HCT116 (cell line): ENCODE measurements at regions of chr9 and their contacts with region 1.

Region 1: GRCh38 chr9:76810377-76810957 is 46.2 kb downstream of the PCA3 start:
- DNase-seq: peak; percentile 59
- ATAC-seq: peak; percentile 90
- H3K4me3 ChIP-seq: no peak overlapping the region
- H3K27ac ChIP-seq: no peak overlapping the region
- H3K4me1 ChIP-seq: no peaks in the 10 kb centered on the region
- H3K27me3 ChIP-seq: 0 out of 2 replicates have a peak, but pooled peaks cover 11% of the 10 kb centered on the region
- CTCF ChIP-seq: peak; percentile 63 to 89 (median 88)
- POLR2A ChIP-seq: no peak
- RAD21 ChIP-seq: peak; percentile 92

Region 2: DNA sequence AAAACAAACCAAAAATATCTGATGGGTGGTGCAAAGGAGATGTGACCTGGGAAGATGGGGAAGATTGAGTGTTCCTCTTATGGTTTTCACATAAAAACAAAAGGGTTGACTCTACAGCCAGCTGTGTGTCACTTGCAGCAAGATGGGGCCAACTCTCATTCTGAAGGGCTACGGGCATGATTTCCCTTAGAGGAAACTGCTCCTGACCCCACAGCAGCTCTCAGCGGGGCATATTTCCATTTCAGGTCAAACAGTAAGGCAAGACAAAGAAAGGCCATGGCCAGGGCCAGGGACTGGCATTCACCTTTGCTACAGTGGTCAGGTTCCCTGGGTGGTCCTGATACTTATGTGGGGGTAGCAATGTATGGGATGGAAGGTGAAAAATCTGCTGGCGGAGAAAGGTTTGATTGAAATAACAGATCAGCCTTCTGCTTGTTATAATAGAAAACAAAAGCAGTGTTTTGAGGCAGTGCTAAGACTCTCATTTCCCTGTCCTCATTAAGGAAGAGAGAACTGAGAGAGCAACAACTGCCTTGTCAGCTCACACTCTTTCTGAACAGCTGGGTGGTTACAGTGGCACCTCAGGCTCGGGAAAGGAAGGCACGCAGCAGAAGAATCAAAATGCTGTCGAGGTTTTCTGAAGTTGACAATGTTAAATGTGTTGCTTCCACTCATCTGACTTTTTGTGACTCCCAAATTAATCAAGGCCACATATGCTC is 166.9 kb before region 1 on chr9:
- CTCF ChIA-PET with region 1: no interaction called
- POLR2A ChIA-PET with region 1: no interaction called
- RAD21 ChIA-PET with region 1: no interaction called
- intact Hi-C with region 1: no loop called
- DNase-seq: no peak
- ATAC-seq: no peak
- H3K4me3 ChIP-seq: no peak overlapping the region
- H3K27ac ChIP-seq: no peak overlapping the region
- H3K4me1 ChIP-seq: no peaks in the 10 kb centered on the region
- H3K27me3 ChIP-seq: no peaks in the 10 kb centered on the region
- CTCF ChIP-seq: no peak
- POLR2A ChIP-seq: no peak
- RAD21 ChIP-seq: no peak

Region 3: DNA sequence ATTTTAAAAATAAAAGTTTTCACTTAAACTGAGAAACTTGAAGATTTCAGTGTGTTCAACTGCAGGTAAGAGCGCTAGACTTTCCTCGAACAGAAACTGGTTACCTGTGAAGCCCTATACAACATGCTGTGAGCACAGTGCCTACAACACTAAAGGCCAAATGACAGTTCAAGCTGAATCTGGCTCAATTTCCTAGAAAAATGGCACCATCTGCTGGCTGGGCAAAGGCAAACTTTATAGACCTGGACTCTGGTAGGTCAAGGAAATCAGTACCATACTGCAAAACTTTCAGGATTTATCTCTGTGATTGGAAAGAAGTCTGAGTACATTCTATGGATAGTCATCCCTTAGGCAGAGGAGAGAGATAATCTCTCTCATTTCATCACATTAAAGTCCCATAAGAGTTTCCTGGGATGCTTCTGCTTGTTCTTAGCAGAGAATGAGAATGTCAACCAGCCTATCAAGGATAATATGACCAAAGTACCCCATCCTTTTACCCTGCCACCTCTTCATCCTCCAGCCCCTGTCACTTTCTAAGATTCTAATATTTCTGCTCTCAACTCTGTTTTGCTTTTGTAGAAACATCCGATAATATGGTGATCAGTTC is 177.2 kb after region 1 on chr9:
- CTCF ChIA-PET with region 1: interaction called, 89 read pairs
- POLR2A ChIA-PET with region 1: no interaction called
- RAD21 ChIA-PET with region 1: interaction called in 1 of 2 experiments, 3 read pairs
- intact Hi-C with region 1: loop called (anchors 1 kb)
- DNase-seq: peak; percentile 48
- ATAC-seq: peak; percentile 90
- H3K4me3 ChIP-seq: no peak overlapping the region
- H3K27ac ChIP-seq: no peak overlapping the region
- H3K4me1 ChIP-seq: no peaks in the 10 kb centered on the region
- H3K27me3 ChIP-seq: peaks cover 23% of the 10 kb centered on the region
- CTCF ChIP-seq: peak; percentile 64 to 80 (median 72)
- POLR2A ChIP-seq: no peak
- RAD21 ChIP-seq: peak; percentile 90

Region 4: DNA sequence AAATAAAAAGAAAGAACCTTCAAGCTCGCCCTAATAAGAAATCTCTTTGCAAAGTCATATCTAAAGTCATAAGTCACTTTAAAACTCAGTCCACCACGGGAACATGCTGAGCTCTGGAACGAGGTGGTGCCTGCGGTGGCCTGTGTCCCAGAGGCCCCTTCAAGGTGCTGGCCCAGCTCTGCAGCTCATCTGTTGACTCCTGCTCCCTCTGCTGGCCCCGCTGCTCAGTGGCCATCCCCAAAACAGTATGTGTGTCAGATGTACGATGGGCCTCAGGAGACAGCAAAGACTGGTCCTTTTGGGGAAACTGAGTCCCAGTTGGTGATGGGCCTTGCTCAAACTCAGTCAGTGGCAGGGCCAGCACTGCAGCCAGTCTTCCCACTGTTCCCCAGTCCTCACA is 186.2 kb after region 1 on chr9:
- CTCF ChIA-PET with region 1: interaction called, 55 read pairs
- POLR2A ChIA-PET with region 1: interaction called, 3 read pairs
- RAD21 ChIA-PET with region 1: interaction called, 7 to 11 read pairs
- intact Hi-C with region 1: loop called (anchors 2 kb)
- DNase-seq: no peak
- ATAC-seq: peak; percentile 98
- H3K4me3 ChIP-seq: no peak overlapping the region
- H3K27ac ChIP-seq: no peak overlapping the region
- H3K4me1 ChIP-seq: no peaks in the 10 kb centered on the region
- H3K27me3 ChIP-seq: no peaks in the 10 kb centered on the region
- CTCF ChIP-seq: peak; percentile 45 to 75 (median 67)
- POLR2A ChIP-seq: no peak
- RAD21 ChIP-seq: peak; percentile 59

Region 5: DNA sequence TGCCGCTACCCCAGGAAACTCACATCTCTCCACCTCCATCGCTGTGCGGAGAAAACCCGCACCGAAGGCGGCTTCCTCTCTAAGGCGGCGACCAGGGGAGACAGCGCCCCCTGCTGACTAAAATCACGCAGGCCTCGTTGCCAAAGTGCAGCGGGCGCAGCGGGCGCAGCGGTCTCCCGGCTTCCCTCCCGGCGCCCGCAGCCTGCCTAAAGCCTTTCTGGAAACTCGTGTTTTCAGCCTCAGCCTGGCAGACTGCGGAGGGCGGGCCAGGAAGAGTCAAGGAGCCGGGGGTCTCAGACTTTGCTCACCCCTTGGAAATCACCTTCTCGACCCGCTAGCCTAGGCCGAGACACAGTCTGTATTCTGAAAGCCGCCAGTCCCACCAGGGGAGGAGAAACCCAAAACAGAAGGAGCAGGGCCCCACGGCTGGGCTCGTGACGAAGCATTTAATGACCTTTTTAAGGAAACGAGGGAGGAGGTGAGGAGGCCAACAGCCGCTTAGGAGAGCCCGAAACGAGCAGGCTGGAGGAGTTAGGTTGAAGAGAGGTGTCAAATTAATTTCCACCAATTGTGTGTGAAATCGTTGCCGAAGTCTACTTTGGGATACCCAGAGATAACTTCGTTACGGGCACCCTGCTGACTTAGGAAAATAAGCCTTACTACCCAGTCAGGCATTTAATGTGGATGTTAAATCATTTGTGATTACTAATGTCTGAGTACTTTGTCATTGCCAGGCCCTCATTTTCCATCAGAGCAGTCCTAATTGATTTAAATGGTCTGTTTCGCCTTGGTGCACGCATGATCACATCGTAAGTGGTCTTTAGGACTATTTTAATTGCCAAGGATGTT is 201.7 kb after region 1 on chr9:
- CTCF ChIA-PET with region 1: no interaction called
- POLR2A ChIA-PET with region 1: no interaction called
- RAD21 ChIA-PET with region 1: no interaction called
- intact Hi-C with region 1: loop called (anchors 5 kb)
- DNase-seq: peak; percentile 38
- ATAC-seq: peak; percentile 95
- H3K4me3 ChIP-seq: peak overlapping the region; percentile 31 to 51
- H3K27ac ChIP-seq: no peak overlapping the region
- H3K4me1 ChIP-seq: peaks cover 4 to 11% of the 10 kb centered on the region in 2 experiments; a peak in 3 of 4 replicates
- H3K27me3 ChIP-seq: no peaks in the 10 kb centered on the region
- CTCF ChIP-seq: peak; percentile 55 to 81 (median 74); a peak in 5 of 6 replicates
- POLR2A ChIP-seq: no peak
- RAD21 ChIP-seq: peak; percentile 69